MCF 10A (cell line): ENCODE measurements at regions of chr5 and their contacts with region 1.

Region 1: DNA sequence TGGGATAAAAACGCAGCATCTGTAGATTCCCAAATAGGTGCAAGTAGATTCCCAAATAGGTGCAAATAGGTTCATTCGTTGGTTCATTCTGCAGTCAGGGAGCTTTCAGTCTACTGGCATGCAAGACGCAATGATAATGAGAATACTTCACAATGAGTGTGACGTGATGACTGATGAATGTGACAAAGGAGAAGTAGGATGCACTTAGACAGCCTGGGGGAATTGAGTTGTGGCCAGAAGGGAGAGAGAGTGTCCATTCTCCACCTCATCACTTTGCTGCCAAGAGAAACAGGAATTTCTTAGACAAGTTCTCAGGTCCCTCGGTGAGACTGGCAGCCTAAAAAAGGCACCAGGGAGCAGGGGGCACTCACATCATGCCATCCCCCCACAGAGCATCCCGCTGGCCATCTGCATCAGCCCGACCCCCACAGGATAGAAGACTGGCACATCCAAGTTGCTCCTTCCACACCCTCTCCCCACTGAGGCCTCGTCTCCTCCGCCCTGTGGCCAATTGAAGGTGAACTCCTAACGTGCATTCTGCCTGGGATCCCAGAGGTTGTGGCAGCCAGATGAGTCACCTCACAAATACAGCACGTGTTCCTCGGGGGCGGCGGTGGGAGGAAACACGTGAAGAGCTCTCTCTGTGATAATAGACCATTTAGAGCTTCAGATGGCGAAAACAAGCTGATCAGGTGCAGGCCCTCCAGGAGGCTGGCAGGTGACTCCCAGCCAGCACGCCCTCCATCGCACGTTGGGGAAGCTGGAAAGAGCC is 19.9 kb upstream of the KCNIP1 start:
- DNase-seq: peak; percentile 90
- H3K4me3 Mint-ChIP-seq: no peak overlapping the region
- H3K27ac Mint-ChIP-seq: no peak overlapping the region
- H3K4me1 Mint-ChIP-seq: peaks cover 21% of the 10 kb centered on the region
- H3K27me3 Mint-ChIP-seq: no peaks in the 10 kb centered on the region
- CTCF ChIP-seq: peak; percentile 6

Region 2: DNA sequence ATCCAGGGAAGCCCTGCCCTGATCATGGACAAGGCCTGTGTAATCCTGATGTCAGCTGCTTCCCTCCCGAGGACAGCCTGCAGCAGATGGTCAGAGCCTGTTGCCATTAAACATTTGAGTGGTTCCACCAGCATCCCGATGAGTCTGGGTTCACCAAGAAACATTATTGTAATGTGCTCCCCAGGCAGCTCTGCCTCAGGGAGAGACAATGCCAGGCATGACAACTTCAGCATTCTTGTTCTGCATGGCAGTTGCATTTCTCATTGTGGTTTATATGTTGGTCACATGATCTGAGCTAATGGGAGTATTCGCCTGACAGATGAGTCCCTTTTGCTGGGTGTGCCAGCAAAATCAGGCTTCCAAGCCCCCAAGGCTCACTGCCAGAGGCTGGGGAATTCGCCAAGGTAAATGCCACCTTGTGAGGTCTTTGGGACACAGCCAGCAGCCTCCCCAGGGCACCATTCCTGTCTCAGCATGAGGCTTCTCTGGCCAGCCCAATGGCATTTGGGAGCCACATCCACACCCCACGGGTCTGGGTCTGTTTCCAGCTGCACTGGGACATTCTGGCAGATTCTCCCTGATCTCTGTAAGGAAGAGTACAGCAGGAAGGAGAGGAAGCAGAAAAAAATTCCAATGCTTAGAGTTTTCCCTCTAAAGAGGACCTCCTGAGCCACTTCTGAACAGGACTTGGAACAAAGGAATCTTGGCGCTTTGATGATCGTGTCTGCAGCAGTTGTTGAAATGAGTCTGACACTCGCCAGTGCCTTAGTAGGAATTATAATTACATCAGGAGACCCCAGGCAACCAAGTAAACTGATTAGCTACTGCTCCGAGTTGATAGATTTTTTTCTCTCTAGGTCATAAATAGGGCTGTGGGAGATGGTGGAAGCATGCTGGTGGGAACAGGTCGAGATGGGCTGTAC is 38.6 kb after region 1 on chr5:
- CTCF ChIA-PET with region 1: interaction called, 3 read pairs
- POLR2A ChIA-PET with region 1: no interaction called
- intact Hi-C with region 1: loop called (anchors 2 kb)
- DNase-seq: peak; percentile 90
- H3K4me3 Mint-ChIP-seq: no peak overlapping the region
- H3K27ac Mint-ChIP-seq: no peak overlapping the region
- H3K4me1 Mint-ChIP-seq: peaks cover 27% of the 10 kb centered on the region
- H3K27me3 Mint-ChIP-seq: peaks cover 27% of the 10 kb centered on the region
- CTCF ChIP-seq: no peak